Activated CD8-positive, alpha-beta T cell treated with anti-CD3 and anti-CD28 coated beads, Interleukin-2, amount 10 ng/mL, durations not matched to agents 7 days and 5 days (primary cell): ENCODE measurements at regions of chr10 and their contacts with region 1.

Region 1: GRCh38 chr10:62732841-62733653 is 71.5 kb upstream of the ADO start:
- DNase-seq: peak; percentile 80
- ATAC-seq: peak; percentile 89
- H3K4me3 Mint-ChIP-seq: no peak overlapping the region
- H3K27ac Mint-ChIP-seq: no peak overlapping the region
- H3K4me1 Mint-ChIP-seq: peaks cover 16% of the 10 kb centered on the region
- H3K27me3 Mint-ChIP-seq: peaks cover 5% of the 10 kb centered on the region

Region 2: DNA sequence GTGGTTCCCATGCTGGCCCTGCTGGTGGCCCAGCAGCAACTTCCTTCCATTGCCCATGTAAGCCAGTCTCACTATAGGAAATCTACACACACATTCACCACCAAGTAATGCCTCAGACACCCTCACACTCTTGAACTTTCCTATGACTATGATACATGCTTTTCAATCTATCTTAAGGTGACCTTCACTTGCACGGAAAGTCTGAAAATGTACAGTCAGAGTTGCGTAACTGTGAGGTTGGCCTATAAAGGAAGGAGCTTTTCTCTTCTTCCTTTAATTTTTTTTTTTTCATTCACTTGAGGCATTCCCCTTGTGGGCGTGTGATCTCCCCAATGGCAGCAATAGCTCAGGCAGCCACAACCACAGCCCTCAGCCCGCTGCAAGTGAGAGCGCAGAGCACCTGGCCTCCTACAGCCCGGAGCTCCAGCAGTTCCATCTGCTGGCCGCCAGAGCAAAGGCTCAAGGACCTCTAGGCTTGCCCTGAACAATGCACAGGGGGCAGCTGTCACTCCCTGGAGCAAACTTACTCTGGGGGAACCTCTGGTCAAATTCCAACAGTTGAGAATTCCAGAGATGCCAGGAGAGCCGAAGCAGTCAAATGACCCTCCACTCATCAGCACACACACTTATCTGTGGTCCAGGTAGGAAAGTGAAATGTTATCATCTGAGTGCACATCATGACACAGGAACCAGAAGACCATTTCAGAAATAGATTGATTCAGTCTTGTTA is 51.7 kb before region 1 on chr10:
- CTCF ChIA-PET with region 1: interaction called, 24 read pairs
- POLR2A ChIA-PET with region 1: interaction called, 4 read pairs
- DNase-seq: peak; percentile 79
- ATAC-seq: peak; percentile 92
- H3K4me3 Mint-ChIP-seq: no peak overlapping the region
- H3K27ac Mint-ChIP-seq: peak overlapping the region; percentile 1
- H3K4me1 Mint-ChIP-seq: peaks cover 26% of the 10 kb centered on the region
- H3K27me3 Mint-ChIP-seq: no peaks in the 10 kb centered on the region

Region 3: GRCh38 chr10:62760401-62760800 is 27.4 kb after region 1 on chr10:
- CTCF ChIA-PET with region 1: no interaction called
- POLR2A ChIA-PET with region 1: no interaction called
- DNase-seq: no peak
- ATAC-seq: no peak
- H3K4me3 Mint-ChIP-seq: no peak overlapping the region
- H3K27ac Mint-ChIP-seq: no peak overlapping the region
- H3K4me1 Mint-ChIP-seq: peaks cover 21% of the 10 kb centered on the region
- H3K27me3 Mint-ChIP-seq: no peaks in the 10 kb centered on the region

Region 4: DNA sequence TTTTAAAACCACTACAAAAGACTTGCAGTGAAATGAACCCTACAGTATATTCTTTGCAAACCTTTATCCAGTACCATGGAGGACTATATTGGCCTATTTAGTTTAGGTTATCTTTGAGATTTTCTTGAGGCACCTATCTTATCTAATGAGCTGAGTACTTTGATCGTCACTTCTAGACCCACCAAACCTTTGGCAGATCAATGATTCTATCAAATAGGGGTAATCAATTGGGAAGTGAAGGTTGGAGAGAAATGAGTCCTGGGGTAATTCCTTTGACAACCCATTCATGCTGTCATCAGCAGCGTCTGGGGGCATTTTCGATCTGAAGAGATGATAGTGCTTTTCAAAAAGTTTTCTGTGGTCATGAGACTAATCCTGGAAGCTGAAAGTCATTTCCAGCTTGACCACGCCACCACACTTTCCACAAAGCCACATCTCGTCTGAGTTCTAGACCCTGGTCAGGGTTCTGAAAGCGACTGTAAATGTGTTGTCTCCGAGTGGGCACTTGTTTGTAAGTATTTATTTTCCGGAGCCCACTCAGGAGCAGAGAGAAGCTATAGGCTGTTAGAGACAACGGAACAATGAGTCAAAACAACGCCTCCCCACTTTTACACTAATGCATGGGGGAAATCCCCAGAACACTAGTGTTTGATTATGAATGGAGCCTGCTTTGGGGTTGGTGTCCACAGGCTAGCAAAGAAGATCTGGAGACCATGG is 78.3 kb after region 1 on chr10:
- CTCF ChIA-PET with region 1: interaction called, 39 read pairs
- POLR2A ChIA-PET with region 1: interaction called, 28 read pairs
- DNase-seq: peak; percentile 67
- ATAC-seq: peak; percentile 7
- H3K4me3 Mint-ChIP-seq: peak overlapping the region; percentile 12
- H3K27ac Mint-ChIP-seq: no peak overlapping the region
- H3K4me1 Mint-ChIP-seq: peaks cover 87% of the 10 kb centered on the region
- H3K27me3 Mint-ChIP-seq: peaks cover 26% of the 10 kb centered on the region